ENCODE measurements at regions of chr13 and their contacts with region 1.

Region 1: DNA sequence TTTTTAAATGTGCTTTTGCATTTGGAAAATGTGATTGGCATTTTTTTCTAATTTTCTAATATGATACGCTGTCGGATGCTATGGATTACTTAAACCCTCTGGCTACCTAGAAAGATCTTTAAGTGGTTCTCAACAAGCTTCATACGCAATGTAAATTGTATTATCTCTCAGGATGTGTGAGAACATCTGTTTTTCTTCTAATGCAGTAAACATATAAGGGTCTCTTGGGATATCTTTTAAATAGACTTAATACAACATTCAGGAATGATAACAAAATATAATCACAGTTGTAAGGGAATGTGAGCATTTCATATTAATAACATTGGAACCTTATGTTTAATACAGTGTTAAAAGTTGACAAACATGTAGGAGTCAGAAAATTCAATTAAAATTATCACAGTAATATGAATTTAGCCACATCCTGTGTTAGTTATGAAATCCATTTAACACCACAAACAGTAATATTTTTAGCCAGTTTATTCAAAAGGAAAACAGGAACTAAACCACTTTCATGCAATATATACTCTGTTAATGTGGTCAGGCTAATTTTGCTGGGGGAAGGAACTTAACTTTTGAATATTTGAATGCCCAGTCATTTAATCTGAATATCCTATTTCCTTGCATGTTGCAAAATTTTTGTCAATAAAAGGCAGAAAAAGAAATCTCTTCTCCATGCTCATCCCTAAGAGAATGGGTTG is 15.0 kb upstream of the ALOX5AP start:
- DNase-seq: no peak
- ATAC-seq: no peak
- H3K4me3 ChIP-seq: no peak overlapping the region
- H3K27ac ChIP-seq: no peak overlapping the region
- H3K4me1 ChIP-seq: peaks cover 0 to 49% (median 7%) of the 10 kb centered on the region in 12 donors
- H3K27me3 ChIP-seq: peaks cover 0 to 3% (median 0%) of the 10 kb centered on the region in 9 donors
- CTCF ChIP-seq: no peak
- POLR2A ChIP-seq: no peak

Region 2: DNA sequence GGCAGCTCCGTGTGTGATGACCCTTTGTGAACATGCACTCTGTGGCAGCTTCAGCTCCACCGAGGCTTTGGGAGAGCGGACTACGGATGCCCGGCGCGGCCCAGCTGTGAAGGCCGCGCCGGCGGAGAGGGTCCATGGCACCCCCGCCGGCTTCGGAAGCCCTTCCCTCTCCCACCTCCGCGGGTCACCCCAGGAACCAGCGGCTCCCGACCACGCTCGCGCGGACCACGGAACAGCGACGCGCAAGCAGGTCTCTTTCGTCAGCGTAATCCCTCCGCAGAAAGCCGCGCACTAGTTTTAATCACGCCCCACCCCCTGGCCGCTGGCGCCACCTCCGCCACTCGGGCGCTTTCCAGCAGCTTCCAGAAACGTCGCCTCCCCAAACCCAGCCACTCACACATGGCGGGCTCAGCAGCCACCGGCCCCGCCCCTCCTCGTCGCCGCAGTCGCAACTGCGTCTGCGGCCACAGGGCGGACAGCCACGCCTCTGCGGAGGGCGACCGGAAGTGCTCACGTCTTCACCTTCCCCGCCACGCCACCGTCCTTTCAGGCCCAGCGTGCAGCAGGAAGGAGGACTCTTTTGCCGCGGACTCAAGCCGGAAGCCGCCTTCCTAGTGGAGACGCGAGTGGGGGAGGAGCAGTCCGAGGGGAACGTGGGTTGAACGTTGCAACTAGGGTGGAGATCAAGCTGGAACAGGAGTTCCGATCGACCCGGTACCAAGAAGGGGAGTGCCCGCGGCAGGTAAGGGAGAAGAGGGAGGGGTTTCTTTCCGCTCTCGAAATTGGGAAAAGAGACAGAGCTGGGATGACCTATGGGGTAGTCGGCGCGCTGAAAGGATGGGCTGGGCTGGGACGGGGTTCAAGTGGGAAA is 102.8 kb before region 1 on chr13 and contains the start of gene USPL1:
- intact Hi-C with region 1: no loop called
- DNase-seq: peak; percentile 99
- ATAC-seq: peak; percentile 95 to 98 (median 96)
- H3K4me3 ChIP-seq: peak within 1 kb of the TSS; percentile 61 to 89 (median 84)
- H3K27ac ChIP-seq: peak within 1 kb of the TSS; percentile 98 to 100 (median 99)
- H3K4me1 ChIP-seq: peaks cover 0 to 42% (median 25%) of the 10 kb centered on the region in 12 donors
- H3K27me3 ChIP-seq: no peaks in the 10 kb centered on the region
- CTCF ChIP-seq: peak in 11 of 12 donors; percentile 14 to 48 (median 32)
- POLR2A ChIP-seq: peak; percentile 40 to 92
- total RNA-seq, gene USPL1: 9.0 to 14.3 (median 10.2) TPM

Region 3: DNA sequence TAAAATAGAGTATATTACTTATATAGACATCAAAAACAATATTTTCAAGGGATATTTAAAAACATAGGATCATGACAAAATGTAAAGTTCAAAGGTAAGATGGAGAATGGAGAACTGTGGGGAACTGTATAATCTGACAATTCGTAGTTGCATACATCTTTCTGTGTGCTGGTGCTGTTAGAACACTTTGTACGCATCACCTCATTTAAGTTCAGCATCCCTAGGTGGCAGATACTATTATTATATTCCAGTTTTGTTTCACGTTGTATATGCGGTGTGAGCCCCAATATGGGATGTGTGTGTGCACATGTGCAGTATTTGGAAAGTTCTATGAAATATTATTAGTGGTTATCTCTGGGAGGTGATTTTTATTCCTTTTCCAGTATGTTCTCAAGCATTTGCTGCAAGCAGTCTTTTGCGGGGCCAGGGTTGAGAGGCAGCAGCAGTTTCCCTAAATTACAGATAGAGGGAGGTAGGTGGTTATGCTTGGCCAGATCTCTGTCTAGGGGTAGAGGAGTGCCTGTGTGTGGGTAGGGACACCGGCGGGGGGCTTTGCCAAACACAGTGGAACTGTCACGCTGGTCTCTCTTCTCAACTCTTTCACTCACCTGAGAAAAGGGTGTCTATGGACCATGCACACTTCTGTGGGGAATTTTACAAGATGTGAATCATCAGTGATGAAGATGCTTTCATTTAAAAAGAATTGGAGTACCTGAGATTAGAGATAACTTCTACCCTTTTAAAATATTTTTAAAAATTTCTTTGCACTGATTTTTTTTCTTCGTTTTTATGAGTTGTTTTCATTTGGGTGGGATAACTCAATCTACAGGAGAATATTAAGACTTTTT is 40.6 kb before region 1 on chr13:
- intact Hi-C with region 1: loop called in 1 of 10 experiments (anchors 5 kb)
- DNase-seq: peak in 1 of 5 donors; percentile 33
- ATAC-seq: peak; percentile 52 to 85 (median 74)
- H3K4me3 ChIP-seq: no peak overlapping the region
- H3K27ac ChIP-seq: no peak overlapping the region
- H3K4me1 ChIP-seq: peaks cover 0 to 19% (median 0%) of the 10 kb centered on the region in 12 donors
- H3K27me3 ChIP-seq: no peaks in the 10 kb centered on the region
- CTCF ChIP-seq: peak; percentile 34 to 68 (median 53)
- POLR2A ChIP-seq: no peak

Measured in heart left ventricle (tissue), 16 donors.